HepG2 (cell line): ENCODE measurements at regions of chr6 and their contacts with region 1.

Region 1: GRCh38 chr6:125956506-125957390 is at the start of gene HINT3:
- DNase-seq: peak; percentile 94
- ATAC-seq: peak; percentile 87
- H3K4me3 ChIP-seq: peak within 1 kb of the TSS; percentile 71 to 99 (median 81)
- H3K27ac ChIP-seq: peak within 1 kb of the TSS; percentile 88
- H3K4me1 ChIP-seq: peaks cover 50% of the 10 kb centered on the region
- H3K27me3 ChIP-seq: no peaks in the 10 kb centered on the region; a peak in 1 of 5 replicates
- CTCF ChIP-seq: peak; percentile 100
- EP300 ChIP-seq: peak; percentile 22 to 73; a peak in 2 of 4 replicates
- POLR2A ChIP-seq: peak; percentile 52 to 63; a peak in 3 of 4 replicates
- RAD21 ChIP-seq: peak; percentile 98
- total RNA-seq, gene HINT3: 22.8 and 33.0 TPM in 2 replicates

Region 2: GRCh38 chr6:125314019-125314581 is 642.6 kb before region 1 on chr6:
- CTCF ChIA-PET with region 1: no interaction called
- POLR2A ChIA-PET with region 1: no interaction called
- in situ Hi-C with region 1: loop called (anchors 10 kb)
- intact Hi-C with region 1: loop called (anchors 1 kb)
- DNase-seq: peak; percentile 53
- ATAC-seq: peak; percentile 94
- H3K4me3 ChIP-seq: no peak overlapping the region
- H3K27ac ChIP-seq: no peak overlapping the region
- H3K4me1 ChIP-seq: peaks cover 6% of the 10 kb centered on the region; the same call in 1 of the 2 replicates
- H3K27me3 ChIP-seq: peaks cover 0 to 16% of the 10 kb centered on the region in 2 experiments; a peak in 1 of 5 replicates
- CTCF ChIP-seq: peak; percentile 87
- EP300 ChIP-seq: no peak
- POLR2A ChIP-seq: no peak
- RAD21 ChIP-seq: peak; percentile 83

Region 3: GRCh38 chr6:125790358-125791150 is 166.2 kb before region 1 on chr6 and contains the start of gene NCOA7:
- CTCF ChIA-PET with region 1: no interaction called
- POLR2A ChIA-PET with region 1: interaction called, 40 read pairs
- in situ Hi-C with region 1: loop called (anchors 5 kb)
- intact Hi-C with region 1: loop called (anchors 1 kb)
- DNase-seq: peak; percentile 65
- ATAC-seq: peak; percentile 89
- H3K4me3 ChIP-seq: peak within 1 kb of the TSS; percentile 90 to 97 (median 94)
- H3K27ac ChIP-seq: peak within 1 kb of the TSS; percentile 88
- H3K4me1 ChIP-seq: peaks cover 42% of the 10 kb centered on the region
- H3K27me3 ChIP-seq: no peaks in the 10 kb centered on the region; a peak in 2 of 5 replicates
- CTCF ChIP-seq: peak; percentile 13
- EP300 ChIP-seq: no peak
- POLR2A ChIP-seq: peak; percentile 78 to 81
- RAD21 ChIP-seq: peak; percentile 79
- total RNA-seq, gene NCOA7: 13.6 and 24.3 TPM in 2 replicates

Region 4: GRCh38 chr6:125888989-125889656 is 67.6 kb before region 1 on chr6:
- CTCF ChIA-PET with region 1: interaction called, 18 read pairs
- POLR2A ChIA-PET with region 1: interaction called, 7 read pairs
- in situ Hi-C with region 1: no loop called
- intact Hi-C with region 1: loop called (anchors 1 kb)
- DNase-seq: peak; percentile 64
- ATAC-seq: peak; percentile 79
- H3K4me3 ChIP-seq: no peak overlapping the region
- H3K27ac ChIP-seq: no peak overlapping the region
- H3K4me1 ChIP-seq: peaks cover 7% of the 10 kb centered on the region
- H3K27me3 ChIP-seq: no peaks in the 10 kb centered on the region
- CTCF ChIP-seq: peak; percentile 62
- EP300 ChIP-seq: no peak
- POLR2A ChIP-seq: no peak
- RAD21 ChIP-seq: peak; percentile 66; the same call in 1 of the 2 replicates

Region 5: GRCh38 chr6:125906158-125906998 is 50.4 kb before region 1 on chr6:
- CTCF ChIA-PET with region 1: interaction called, 11 read pairs
- POLR2A ChIA-PET with region 1: interaction called, 3 read pairs
- in situ Hi-C with region 1: loop called (anchors 5 kb)
- intact Hi-C with region 1: loop called (anchors 1 kb)
- DNase-seq: peak; percentile 58
- ATAC-seq: peak; percentile 94
- H3K4me3 ChIP-seq: no peak overlapping the region
- H3K27ac ChIP-seq: no peak overlapping the region
- H3K4me1 ChIP-seq: peaks cover 27% of the 10 kb centered on the region
- H3K27me3 ChIP-seq: no peaks in the 10 kb centered on the region
- CTCF ChIP-seq: peak; percentile 89
- EP300 ChIP-seq: no peak
- POLR2A ChIP-seq: no peak
- RAD21 ChIP-seq: peak; percentile 68

Region 6: GRCh38 chr6:125944434-125944816 is 12.3 kb before region 1 on chr6:
- CTCF ChIA-PET with region 1: no interaction called
- POLR2A ChIA-PET with region 1: interaction called, 48 read pairs
- in situ Hi-C with region 1: no loop called
- intact Hi-C with region 1: no loop called
- DNase-seq: peak; percentile 98
- ATAC-seq: peak; percentile 96
- H3K4me3 ChIP-seq: peak overlapping the region in 2 of 3 experiments; percentile 35 to 56; a peak in 3 of 6 replicates
- H3K27ac ChIP-seq: peak overlapping the region; percentile 92
- H3K4me1 ChIP-seq: peaks cover 85% of the 10 kb centered on the region
- H3K27me3 ChIP-seq: no peaks in the 10 kb centered on the region
- CTCF ChIP-seq: no peak
- EP300 ChIP-seq: peak; percentile 56 to 88; a peak in 2 of 4 replicates
- POLR2A ChIP-seq: no peak
- RAD21 ChIP-seq: no peak

Region 7: GRCh38 chr6:125986300-125987025 is 29.7 kb after region 1 on chr6 and contains the start of gene TRMT11:
- CTCF ChIA-PET with region 1: no interaction called
- POLR2A ChIA-PET with region 1: interaction called, 71 read pairs
- in situ Hi-C with region 1: no loop called
- intact Hi-C with region 1: no loop called
- DNase-seq: peak; percentile 97
- ATAC-seq: peak; percentile 98
- H3K4me3 ChIP-seq: peak within 1 kb of the TSS; percentile 80 to 95 (median 84)
- H3K27ac ChIP-seq: peak within 1 kb of the TSS; percentile 87
- H3K4me1 ChIP-seq: peaks cover 62% of the 10 kb centered on the region
- H3K27me3 ChIP-seq: no peaks in the 10 kb centered on the region; a peak in 1 of 5 replicates
- CTCF ChIP-seq: peak; percentile 46
- EP300 ChIP-seq: peak in 1 of 2 experiments; percentile 6; a peak in 3 of 4 replicates
- POLR2A ChIP-seq: peak; percentile 96 to 98
- RAD21 ChIP-seq: peak; percentile 47
- total RNA-seq, gene TRMT11: 66.0 and 81.9 TPM in 2 replicates

Region 8: DNA sequence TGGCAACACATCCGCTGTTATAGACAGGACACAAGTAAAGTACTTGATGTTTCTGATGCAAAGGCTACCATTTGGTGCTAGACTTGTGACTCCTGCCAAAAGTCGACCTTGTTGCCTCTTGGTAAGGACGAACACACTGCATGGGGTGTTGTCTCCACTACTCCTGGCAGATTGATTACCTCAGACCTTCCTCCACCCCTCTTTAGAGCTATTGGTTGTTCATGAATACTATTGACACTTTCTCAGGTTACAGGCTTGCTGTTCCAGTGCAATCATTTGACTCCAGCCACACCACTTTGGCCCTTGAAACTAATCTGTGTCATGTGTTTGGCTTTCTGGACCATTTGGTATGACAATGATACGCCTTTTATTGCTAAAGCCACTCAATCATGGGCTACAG is 91.9 kb after region 1 on chr6:
- CTCF ChIA-PET with region 1: no interaction called
- POLR2A ChIA-PET with region 1: no interaction called
- in situ Hi-C with region 1: no loop called
- intact Hi-C with region 1: no loop called
- DNase-seq: no peak
- ATAC-seq: no peak
- H3K4me3 ChIP-seq: no peak overlapping the region
- H3K27ac ChIP-seq: no peak overlapping the region
- H3K4me1 ChIP-seq: peaks cover 14% of the 10 kb centered on the region
- H3K27me3 ChIP-seq: no peaks in the 10 kb centered on the region
- CTCF ChIP-seq: no peak
- EP300 ChIP-seq: no peak
- POLR2A ChIP-seq: no peak
- RAD21 ChIP-seq: no peak

Region 9: DNA sequence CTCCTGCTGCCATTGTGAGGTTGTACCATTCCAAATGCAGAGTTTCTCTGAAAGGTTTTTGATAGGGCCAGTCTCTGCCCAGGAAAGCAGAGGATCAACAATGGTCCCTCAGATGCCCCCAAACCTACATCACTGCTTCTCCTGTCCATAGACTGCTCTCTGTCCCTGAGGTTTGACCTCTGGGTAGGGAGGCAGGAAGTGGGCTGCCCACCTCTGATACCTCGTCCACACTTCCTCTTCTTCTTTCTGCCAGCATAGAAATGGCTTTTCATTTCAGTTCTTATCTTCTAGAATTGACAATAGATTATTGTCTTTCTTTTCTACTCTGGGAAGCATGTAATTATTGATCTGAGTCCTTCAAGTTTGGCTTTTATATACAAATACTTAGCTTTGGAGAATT is 200.2 kb after region 1 on chr6:
- CTCF ChIA-PET with region 1: no interaction called
- POLR2A ChIA-PET with region 1: no interaction called
- in situ Hi-C with region 1: no loop called
- intact Hi-C with region 1: no loop called
- DNase-seq: no peak
- ATAC-seq: no peak
- H3K4me3 ChIP-seq: no peak overlapping the region
- H3K27ac ChIP-seq: no peak overlapping the region
- H3K4me1 ChIP-seq: no peaks in the 10 kb centered on the region
- H3K27me3 ChIP-seq: no peaks in the 10 kb centered on the region
- CTCF ChIP-seq: no peak
- EP300 ChIP-seq: no peak
- POLR2A ChIP-seq: no peak
- RAD21 ChIP-seq: no peak